Activated B cell treated with CpG ODN at 0.5 μM for 24 hours (primary cell): ENCODE measurements at regions of chr1 and their contacts with region 1.

Region 1: GRCh38 chr1:66924756-66925557 is at the starts of genes DNAI4 and MIER1:
- DNase-seq: peak; percentile 95
- ATAC-seq: peak; percentile 94
- H3K4me3 Mint-ChIP-seq: peak within 1 kb of the TSS; percentile 93
- H3K27ac Mint-ChIP-seq: peak within 1 kb of the TSS; percentile 95
- H3K4me1 Mint-ChIP-seq: peaks cover 30% of the 10 kb centered on the region
- H3K27me3 Mint-ChIP-seq: no peaks in the 10 kb centered on the region
- CTCF ChIP-seq: no peak
- total RNA-seq, gene DNAI4: 0.75 and 3.4 TPM in 2 replicates
- total RNA-seq, gene MIER1: 39.1 and 39.2 TPM in 2 replicates

Region 2: GRCh38 chr1:66271216-66271903 is 653.6 kb before region 1 on chr1:
- CTCF ChIA-PET with region 1: no interaction called
- POLR2A ChIA-PET with region 1: no interaction called
- intact Hi-C with region 1: loop called (anchors 5 kb)
- DNase-seq: no peak
- ATAC-seq: peak; percentile 78
- H3K4me3 Mint-ChIP-seq: peak overlapping the region; percentile 57
- H3K27ac Mint-ChIP-seq: peak overlapping the region; percentile 81
- H3K4me1 Mint-ChIP-seq: peaks cover 51% of the 10 kb centered on the region
- H3K27me3 Mint-ChIP-seq: no peaks in the 10 kb centered on the region
- CTCF ChIP-seq: no peak

Region 3: GRCh38 chr1:66436378-66437145 is 488.4 kb before region 1 on chr1:
- CTCF ChIA-PET with region 1: no interaction called
- POLR2A ChIA-PET with region 1: no interaction called
- intact Hi-C with region 1: loop called (anchors 10 kb)
- DNase-seq: no peak
- ATAC-seq: peak; percentile 65
- H3K4me3 Mint-ChIP-seq: no peak overlapping the region
- H3K27ac Mint-ChIP-seq: peak overlapping the region; percentile 63
- H3K4me1 Mint-ChIP-seq: peaks cover 38% of the 10 kb centered on the region
- H3K27me3 Mint-ChIP-seq: no peaks in the 10 kb centered on the region
- CTCF ChIP-seq: no peak

Region 4: GRCh38 chr1:66954208-66954607 is 29.3 kb after region 1 on chr1:
- CTCF ChIA-PET with region 1: no interaction called
- POLR2A ChIA-PET with region 1: no interaction called
- intact Hi-C with region 1: no loop called
- DNase-seq: no peak
- ATAC-seq: no peak
- H3K4me3 Mint-ChIP-seq: no peak overlapping the region
- H3K27ac Mint-ChIP-seq: no peak overlapping the region
- H3K4me1 Mint-ChIP-seq: peaks cover 6% of the 10 kb centered on the region
- H3K27me3 Mint-ChIP-seq: no peaks in the 10 kb centered on the region
- CTCF ChIP-seq: no peak

Region 5: DNA sequence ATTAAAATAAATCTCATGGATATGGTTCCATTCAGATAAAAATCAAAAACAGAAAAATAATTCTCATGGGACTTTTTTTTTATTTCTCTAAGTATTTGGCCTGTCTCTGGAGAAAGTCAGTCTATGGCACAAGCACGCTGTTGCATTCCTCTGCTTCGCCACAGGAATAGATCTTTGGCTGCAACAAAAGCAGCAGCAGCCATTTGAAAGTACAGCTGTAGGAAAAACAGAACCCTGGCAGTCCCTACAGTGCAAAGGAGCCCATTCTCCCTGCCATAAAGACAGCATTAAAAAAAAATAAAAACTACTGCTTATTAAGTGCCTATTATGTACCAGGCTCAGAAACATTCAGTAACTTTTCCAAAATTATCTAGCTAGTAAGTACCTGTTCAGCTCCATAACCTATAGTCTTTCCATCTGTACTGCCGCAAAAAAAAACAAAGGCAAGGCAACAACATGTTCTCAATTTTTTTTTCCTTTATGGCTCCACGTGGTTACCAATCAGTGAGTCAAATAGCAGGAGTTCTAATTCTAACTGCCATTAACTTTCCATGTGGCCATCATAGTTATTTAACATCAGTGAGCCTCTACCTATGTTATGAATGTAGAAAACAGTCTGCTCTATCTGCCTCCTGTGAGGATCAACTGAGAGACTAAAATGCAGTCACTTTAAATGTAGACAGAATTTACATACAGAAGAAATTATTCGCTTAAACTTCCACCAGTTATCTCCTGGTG is 106.3 kb after region 1 on chr1:
- CTCF ChIA-PET with region 1: no interaction called
- POLR2A ChIA-PET with region 1: no interaction called
- intact Hi-C with region 1: no loop called
- DNase-seq: no peak
- ATAC-seq: no peak
- H3K4me3 Mint-ChIP-seq: no peak overlapping the region
- H3K27ac Mint-ChIP-seq: no peak overlapping the region
- H3K4me1 Mint-ChIP-seq: no peaks in the 10 kb centered on the region
- H3K27me3 Mint-ChIP-seq: no peaks in the 10 kb centered on the region
- CTCF ChIP-seq: no peak

Region 6: DNA sequence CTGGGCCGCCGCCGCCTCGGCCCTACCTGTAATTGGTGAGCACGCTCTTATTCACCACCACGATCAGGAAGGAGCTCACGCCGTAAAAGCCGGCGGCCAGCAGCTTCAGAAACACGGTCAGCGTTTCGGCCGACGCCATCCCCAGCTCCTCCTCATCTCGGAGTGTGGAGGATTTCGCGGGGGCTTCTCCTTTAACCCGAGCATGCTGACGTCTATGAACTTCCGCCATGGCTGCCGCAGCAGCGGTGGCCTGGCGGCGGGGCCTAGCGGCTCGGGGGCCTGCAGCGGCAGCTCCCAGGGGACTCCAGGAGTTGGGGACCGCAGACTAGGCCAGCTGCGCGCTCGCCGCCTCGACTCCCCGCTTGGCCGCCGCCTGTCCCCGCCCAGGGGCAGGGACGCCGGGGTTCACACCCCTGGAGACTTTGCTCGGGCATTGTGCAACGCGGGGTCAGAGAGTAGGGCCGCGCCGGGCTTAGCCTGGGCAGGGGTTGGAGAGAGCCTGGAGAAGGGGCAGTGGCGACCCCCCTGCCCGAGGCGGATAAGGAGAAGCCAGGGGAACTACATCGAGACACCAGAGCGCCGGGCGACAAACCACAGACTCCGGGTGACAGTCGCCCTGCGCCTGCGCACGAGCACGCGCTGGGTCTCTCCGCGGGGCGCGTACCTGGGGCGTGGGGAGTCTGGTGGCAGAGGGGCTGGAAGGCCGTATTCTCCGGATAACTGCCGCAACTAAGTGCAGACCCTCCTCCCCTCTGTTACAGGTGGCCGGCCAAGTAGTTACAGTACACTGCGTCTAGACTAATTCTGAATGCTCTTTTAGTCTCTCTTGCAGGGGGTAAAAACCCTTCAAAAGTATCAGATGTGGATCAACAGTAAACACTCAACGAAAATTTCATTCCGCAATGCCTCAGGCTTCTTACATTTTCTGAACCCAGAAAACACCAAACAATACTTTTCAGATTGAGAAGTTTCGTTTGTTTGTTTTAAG is 129.1 kb after region 1 on chr1 and contains the start of gene SLC35D1:
- CTCF ChIA-PET with region 1: interaction called, 3 read pairs
- POLR2A ChIA-PET with region 1: interaction called, 8 read pairs
- intact Hi-C with region 1: loop called (anchors 1 kb)
- DNase-seq: peak; percentile 82
- ATAC-seq: peak; percentile 85
- H3K4me3 Mint-ChIP-seq: peak within 1 kb of the TSS; percentile 92
- H3K27ac Mint-ChIP-seq: peak within 1 kb of the TSS; percentile 92
- H3K4me1 Mint-ChIP-seq: peaks cover 21% of the 10 kb centered on the region
- H3K27me3 Mint-ChIP-seq: no peaks in the 10 kb centered on the region
- CTCF ChIP-seq: no peak
- total RNA-seq, gene SLC35D1: 10.1 and 11.1 TPM in 2 replicates

Region 7: DNA sequence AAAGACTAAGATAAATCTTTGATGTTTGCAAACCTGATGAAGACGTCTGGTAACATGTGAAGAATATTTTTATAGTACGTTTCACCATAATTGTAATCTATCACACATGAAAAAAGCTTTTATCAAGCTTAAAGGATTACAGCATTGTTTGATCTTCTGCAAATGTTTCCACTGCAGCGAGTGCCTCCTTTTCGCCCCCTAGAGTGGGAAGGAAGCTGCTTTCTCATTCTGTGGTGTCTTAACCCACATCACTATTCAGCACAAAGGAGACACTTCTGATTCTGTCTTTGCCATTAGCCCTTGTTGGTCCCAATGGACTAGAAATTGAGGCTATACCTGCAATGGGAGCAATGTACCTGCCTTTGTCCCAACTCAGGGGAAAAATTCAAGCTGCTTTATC is 336.7 kb after region 1 on chr1:
- CTCF ChIA-PET with region 1: no interaction called
- POLR2A ChIA-PET with region 1: no interaction called
- intact Hi-C with region 1: no loop called
- DNase-seq: no peak
- ATAC-seq: no peak
- H3K4me3 Mint-ChIP-seq: no peak overlapping the region
- H3K27ac Mint-ChIP-seq: no peak overlapping the region
- H3K4me1 Mint-ChIP-seq: peaks cover 9% of the 10 kb centered on the region
- H3K27me3 Mint-ChIP-seq: peaks cover 2% of the 10 kb centered on the region
- CTCF ChIP-seq: no peak

Region 8: GRCh38 chr1:67500413-67500959 is 575.5 kb after region 1 on chr1:
- CTCF ChIA-PET with region 1: no interaction called
- POLR2A ChIA-PET with region 1: no interaction called
- intact Hi-C with region 1: loop called (anchors 1 kb)
- DNase-seq: peak; percentile 70
- ATAC-seq: peak; percentile 98
- H3K4me3 Mint-ChIP-seq: no peak overlapping the region
- H3K27ac Mint-ChIP-seq: no peak overlapping the region
- H3K4me1 Mint-ChIP-seq: peaks cover 4% of the 10 kb centered on the region
- H3K27me3 Mint-ChIP-seq: peaks cover 15% of the 10 kb centered on the region
- CTCF ChIP-seq: peak; percentile 80